Activated B cell treated with CpG ODN at 0.5 μM for 24 hours (primary cell): ENCODE measurements at regions of chr5 and their contacts with region 1.

Region 1: GRCh38 chr5:113513384-113514288 is at the start of gene YTHDC2:
- DNase-seq: peak; percentile 86
- ATAC-seq: peak; percentile 98
- H3K4me3 Mint-ChIP-seq: peak within 1 kb of the TSS; percentile 92
- H3K27ac Mint-ChIP-seq: peak within 1 kb of the TSS; percentile 87
- H3K4me1 Mint-ChIP-seq: peaks cover 28% of the 10 kb centered on the region
- H3K27me3 Mint-ChIP-seq: peaks cover 12% of the 10 kb centered on the region
- CTCF ChIP-seq: no peak
- total RNA-seq, gene YTHDC2: 41.7 and 44.8 TPM in 2 replicates

Region 2: GRCh38 chr5:112976432-112977309 is 537.0 kb before region 1 on chr5 and contains the start of gene DCP2:
- CTCF ChIA-PET with region 1: interaction called, 3 read pairs
- POLR2A ChIA-PET with region 1: interaction called, 9 read pairs
- intact Hi-C with region 1: loop called (anchors 1 kb)
- DNase-seq: peak; percentile 93
- ATAC-seq: peak; percentile 98
- H3K4me3 Mint-ChIP-seq: peak within 1 kb of the TSS; percentile 100
- H3K27ac Mint-ChIP-seq: peak within 1 kb of the TSS; percentile 96
- H3K4me1 Mint-ChIP-seq: peaks cover 53% of the 10 kb centered on the region
- H3K27me3 Mint-ChIP-seq: no peaks in the 10 kb centered on the region
- CTCF ChIP-seq: no peak
- total RNA-seq, gene DCP2: 53.5 and 56.0 TPM in 2 replicates

Region 3: GRCh38 chr5:113378959-113379541 is 134.6 kb before region 1 on chr5:
- CTCF ChIA-PET with region 1: interaction called, 4 read pairs
- POLR2A ChIA-PET with region 1: no interaction called
- intact Hi-C with region 1: loop called (anchors 1 kb)
- DNase-seq: no peak
- ATAC-seq: peak; percentile 71
- H3K4me3 Mint-ChIP-seq: no peak overlapping the region
- H3K27ac Mint-ChIP-seq: no peak overlapping the region
- H3K4me1 Mint-ChIP-seq: peaks cover 5% of the 10 kb centered on the region
- H3K27me3 Mint-ChIP-seq: peaks cover 18% of the 10 kb centered on the region
- CTCF ChIP-seq: no peak